ENCODE measurements at regions of chr1 and their contacts with region 1.

Region 1: GRCh38 chr1:154404984-154405761 is at the start of gene IL6R:
- DNase-seq: peak; percentile 43 to 93 (median 75)
- H3K4me3 ChIP-seq: peak within 1 kb of the TSS; percentile 48 to 84 (median 75)
- H3K27ac ChIP-seq: peak within 1 kb of the TSS in 58 of 59 donors; percentile 58 to 98 (median 87)
- H3K27me3 ChIP-seq: no peaks in the 10 kb centered on the region
- CTCF ChIP-seq: peak in 54 of 56 donors; percentile 14 to 72 (median 48)
- total RNA-seq, gene IL6R: 5.2 to 32.5 (median 12.2) TPM

Region 2: GRCh38 chr1:154256686-154257085 is 148.5 kb before region 1 on chr1:
- intact Hi-C with region 1: no loop called
- DNase-seq: no peak
- H3K4me3 ChIP-seq: no peak overlapping the region
- H3K27ac ChIP-seq: no peak overlapping the region
- H3K27me3 ChIP-seq: no peaks in the 10 kb centered on the region
- CTCF ChIP-seq: no peak

Region 3: GRCh38 chr1:154324669-154325582 is 80.2 kb before region 1 on chr1 and contains the start of gene ATP8B2:
- intact Hi-C with region 1: loop called (anchors 5 to 10 kb)
- DNase-seq: peak; percentile 62 to 88 (median 72)
- H3K4me3 ChIP-seq: peak within 1 kb of the TSS; percentile 63 to 89 (median 77)
- H3K27ac ChIP-seq: peak within 1 kb of the TSS in 58 of 59 donors; percentile 74 to 96 (median 89)
- H3K27me3 ChIP-seq: no peaks in the 10 kb centered on the region
- CTCF ChIP-seq: peak; percentile 55 to 95 (median 88)
- total RNA-seq, gene ATP8B2: 28.2 to 80.0 (median 45.7) TPM

Region 4: GRCh38 chr1:154335025-154335714 is 70.0 kb before region 1 on chr1:
- intact Hi-C with region 1: loop called in 1 of 2 experiments (anchors 10 kb)
- DNase-seq: peak; percentile 69 to 89 (median 79)
- H3K4me3 ChIP-seq: peak overlapping the region in 3 of 59 donors; percentile 4 to 26 (median 4)
- H3K27ac ChIP-seq: peak overlapping the region in 46 of 59 donors; percentile 2 to 78 (median 56)
- H3K27me3 ChIP-seq: no peaks in the 10 kb centered on the region
- CTCF ChIP-seq: peak; percentile 70 to 93 (median 87)

Region 5: GRCh38 chr1:154427173-154428139 is 22.3 kb after region 1 on chr1:
- intact Hi-C with region 1: loop called in 1 of 2 experiments (anchors 2 kb)
- DNase-seq: no peak
- H3K4me3 ChIP-seq: no peak overlapping the region
- H3K27ac ChIP-seq: peak overlapping the region in 40 of 59 donors; percentile 4 to 76 (median 44)
- H3K27me3 ChIP-seq: no peaks in the 10 kb centered on the region
- CTCF ChIP-seq: no peak

Measured in dorsolateral prefrontal cortex (tissue), 120 donors.